CD4-positive, alpha-beta T cell (primary cell): ENCODE measurements at regions of chrX and their contacts with region 1.

Region 1: DNA sequence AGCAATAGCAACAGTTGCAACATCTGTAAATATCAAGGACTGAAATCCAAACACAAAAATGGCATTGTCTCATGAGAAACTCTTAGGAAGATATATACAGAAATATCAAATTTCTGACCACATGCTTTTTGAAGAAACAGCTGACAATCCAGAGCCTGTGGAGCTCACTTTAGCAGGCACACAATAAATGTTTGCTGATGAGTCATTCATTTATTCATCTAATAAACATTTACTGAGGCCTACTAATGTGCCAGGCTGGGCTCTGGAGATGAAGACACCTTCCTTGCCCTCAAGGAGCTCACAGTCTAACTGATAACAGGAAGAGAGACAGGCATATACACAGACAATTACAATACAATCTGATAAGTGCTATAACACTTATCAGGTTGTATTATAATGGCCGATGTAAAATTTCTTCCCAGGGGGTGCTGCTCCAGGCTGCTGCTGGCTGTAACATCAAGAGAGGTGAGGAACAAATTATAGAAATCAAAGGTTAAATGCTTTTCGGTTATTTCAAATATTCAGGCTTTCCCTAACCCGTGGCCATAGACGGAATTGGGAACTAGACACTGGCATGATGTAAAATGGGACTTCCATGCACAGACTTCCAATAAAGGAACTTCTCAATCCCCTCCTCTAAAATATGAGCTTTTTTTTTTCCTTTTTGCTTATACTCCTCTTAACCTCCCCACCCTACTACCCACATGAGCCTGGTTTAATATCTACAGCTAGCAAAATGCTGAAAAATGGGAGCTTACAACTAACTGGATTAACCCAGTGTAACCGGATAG is 16.8 kb upstream of the ZCCHC13 start:
- DNase-seq: no peak
- ATAC-seq: no peak
- H3K4me3 ChIP-seq: no peak overlapping the region
- H3K4me3 Mint-ChIP-seq: no peak overlapping the region
- H3K27ac ChIP-seq: no peak overlapping the region
- H3K27ac Mint-ChIP-seq: no peak overlapping the region
- H3K4me1 ChIP-seq: peaks cover 14% of the 10 kb centered on the region
- H3K4me1 Mint-ChIP-seq: peaks cover 43% of the 10 kb centered on the region
- H3K27me3 ChIP-seq: no peaks in the 10 kb centered on the region
- H3K27me3 Mint-ChIP-seq: no peaks in the 10 kb centered on the region
- CTCF ChIP-seq: no peak

Region 2: GRCh38 chrX:74232859-74233258 is 54.3 kb before region 1 on chrX:
- CTCF ChIA-PET with region 1: no interaction called
- POLR2A ChIA-PET with region 1: no interaction called
- intact Hi-C with region 1: loop called in 1 of 2 experiments (anchors 10 kb)
- DNase-seq: peak in 1 of 14 experiments; percentile 3
- ATAC-seq: no peak
- H3K4me3 ChIP-seq: no peak overlapping the region
- H3K4me3 Mint-ChIP-seq: no peak overlapping the region
- H3K27ac ChIP-seq: no peak overlapping the region
- H3K27ac Mint-ChIP-seq: no peak overlapping the region
- H3K4me1 ChIP-seq: no peaks in the 10 kb centered on the region
- H3K4me1 Mint-ChIP-seq: no peaks in the 10 kb centered on the region
- H3K27me3 ChIP-seq: no peaks in the 10 kb centered on the region
- H3K27me3 Mint-ChIP-seq: no peaks in the 10 kb centered on the region
- CTCF ChIP-seq: no peak

Region 3: DNA sequence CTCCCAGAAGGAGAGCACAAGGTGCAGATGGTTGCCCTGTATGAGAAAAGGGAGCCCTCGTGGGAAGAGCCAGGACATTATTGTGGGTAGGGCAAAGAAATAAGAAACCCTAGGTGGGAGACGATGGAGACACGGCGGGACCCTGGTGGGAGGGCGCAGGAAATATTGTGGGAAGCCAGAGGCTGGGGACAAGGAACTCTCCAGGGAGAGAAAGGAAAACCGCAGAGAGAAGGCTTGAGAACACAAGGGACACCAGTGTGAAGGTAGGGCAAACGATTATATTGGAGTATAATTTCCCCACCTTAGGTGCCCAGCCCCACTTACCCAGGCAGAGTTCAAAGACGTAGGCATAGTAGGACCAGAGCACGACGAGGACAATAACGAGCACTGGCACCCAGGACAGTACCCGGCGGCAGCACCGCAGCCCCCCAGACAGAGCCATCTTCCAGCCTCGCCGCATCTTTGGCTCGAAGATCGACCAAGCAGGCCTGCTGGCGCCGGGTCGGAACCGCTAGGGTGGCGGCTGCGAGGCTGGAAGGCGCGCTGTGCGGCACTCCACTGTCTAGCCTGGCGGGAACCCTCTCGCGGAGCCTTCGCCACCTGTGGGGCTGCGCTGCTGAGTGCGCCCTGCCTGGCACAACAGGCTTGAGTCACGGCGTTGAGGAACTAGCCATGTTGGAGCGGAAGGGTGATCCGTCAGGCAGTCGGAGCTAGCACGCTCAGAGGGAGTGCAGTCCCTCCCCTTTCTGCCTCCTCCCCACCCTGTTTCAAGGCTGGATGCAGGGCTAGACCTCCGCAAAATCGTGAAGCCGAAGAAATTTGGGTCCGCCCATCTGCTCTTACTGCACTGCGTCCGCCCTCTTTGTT is 1235.7 kb after region 1 on chrX and contains the start of gene ZDHHC15:
- CTCF ChIA-PET with region 1: no interaction called
- POLR2A ChIA-PET with region 1: no interaction called
- intact Hi-C with region 1: no loop called
- DNase-seq: peak; percentile 22 to 70 (median 40)
- ATAC-seq: peak; percentile 89
- H3K4me3 ChIP-seq: peak within 1 kb of the TSS; percentile 58
- H3K4me3 Mint-ChIP-seq: peak within 1 kb of the TSS; percentile 84
- H3K27ac ChIP-seq: no peak within 1 kb of the TSS
- H3K27ac Mint-ChIP-seq: peak within 1 kb of the TSS; percentile 48
- H3K4me1 ChIP-seq: no peaks in the 10 kb centered on the region
- H3K4me1 Mint-ChIP-seq: peaks cover 22% of the 10 kb centered on the region
- H3K27me3 ChIP-seq: no peaks in the 10 kb centered on the region
- H3K27me3 Mint-ChIP-seq: no peaks in the 10 kb centered on the region
- CTCF ChIP-seq: no peak
- total RNA-seq, gene ZDHHC15: 0.16 to 0.20 TPM